ENCODE measurements at regions of chr3 and their contacts with region 1.

Region 1: DNA sequence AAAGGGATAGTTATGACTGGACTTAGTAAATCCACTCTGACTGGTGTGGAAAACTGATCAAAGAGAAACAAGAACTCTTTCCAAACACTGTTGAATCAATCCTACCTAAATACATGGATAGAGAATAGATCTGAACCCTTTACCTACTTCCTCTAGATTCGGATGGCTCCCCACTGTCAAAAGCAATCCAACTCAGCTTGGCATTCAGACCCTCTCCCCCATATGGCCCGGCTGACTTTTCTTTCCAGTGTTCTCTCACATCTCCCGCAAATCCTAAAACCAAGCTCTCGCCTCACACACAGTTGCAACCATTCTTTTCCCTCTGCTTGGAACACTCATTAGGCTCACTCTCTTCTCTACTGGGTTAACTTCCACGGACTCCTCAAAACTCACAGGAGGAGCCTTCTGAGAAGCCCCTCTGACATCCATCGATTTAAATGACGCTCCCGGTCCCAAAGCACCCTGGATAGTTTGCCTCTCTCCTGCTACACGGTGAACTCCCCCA is 639 bp downstream of the SPICE1 start:
- DNase-seq: no peak
- H3K4me3 ChIP-seq: peak overlapping the region; percentile 61 to 93
- H3K4me3 Mint-ChIP-seq: no peak overlapping the region
- H3K27ac ChIP-seq: peak overlapping the region; percentile 74
- H3K27ac Mint-ChIP-seq: no peak overlapping the region
- H3K4me1 ChIP-seq: peaks cover 19% of the 10 kb centered on the region
- H3K4me1 Mint-ChIP-seq: peaks cover 6 to 24% (median 9%) of the 10 kb centered on the region in 4 donors
- H3K27me3 ChIP-seq: peaks cover 4% of the 10 kb centered on the region
- H3K27me3 Mint-ChIP-seq: peaks cover 3 to 8% of the 10 kb centered on the region in 2 donors

Region 2: GRCh38 chr3:113264283-113265131 is 249.8 kb before region 1 on chr3:
- CTCF ChIA-PET with region 1: no interaction called
- POLR2A ChIA-PET with region 1: no interaction called
- intact Hi-C with region 1: no loop called
- DNase-seq: no peak
- H3K4me3 ChIP-seq: no peak overlapping the region
- H3K4me3 Mint-ChIP-seq: no peak overlapping the region
- H3K27ac ChIP-seq: no peak overlapping the region
- H3K27ac Mint-ChIP-seq: no peak overlapping the region
- H3K4me1 ChIP-seq: no peaks in the 10 kb centered on the region
- H3K4me1 Mint-ChIP-seq: no peaks in the 10 kb centered on the region
- H3K27me3 ChIP-seq: no peaks in the 10 kb centered on the region
- H3K27me3 Mint-ChIP-seq: peaks cover 1 to 10% of the 10 kb centered on the region in 2 donors

Region 3: DNA sequence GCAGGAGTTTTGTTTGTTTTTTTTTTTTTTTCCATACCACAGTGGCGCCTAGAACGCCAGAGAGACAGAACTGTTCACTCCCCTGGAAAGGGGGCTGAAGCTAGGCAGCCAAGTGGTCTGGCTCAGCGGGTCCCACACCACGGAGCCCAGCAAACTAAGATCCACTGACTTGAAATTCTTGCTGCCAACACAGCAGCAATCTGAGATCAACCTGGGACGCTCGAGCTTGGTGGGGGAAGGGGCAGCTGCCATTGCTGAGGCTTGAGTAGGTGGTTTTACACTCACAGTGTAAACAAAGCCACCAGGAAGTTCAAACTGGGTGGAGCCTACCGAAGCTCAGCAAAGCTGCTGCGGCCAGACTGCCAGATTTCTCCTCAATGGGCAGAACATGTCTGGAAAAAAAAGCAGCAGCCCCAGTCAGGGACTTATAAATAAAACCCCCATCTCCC is 29.1 kb before region 1 on chr3:
- CTCF ChIA-PET with region 1: interaction called, 3 read pairs
- POLR2A ChIA-PET with region 1: interaction called, 16 read pairs
- intact Hi-C with region 1: no loop called
- DNase-seq: peak; percentile 35 to 54 (median 46)
- H3K4me3 ChIP-seq: no peak overlapping the region
- H3K4me3 Mint-ChIP-seq: peak overlapping the region; percentile 40 to 70 (median 58)
- H3K27ac ChIP-seq: no peak overlapping the region
- H3K27ac Mint-ChIP-seq: peak overlapping the region in 6 of 7 donors; percentile 68 to 91 (median 76)
- H3K4me1 ChIP-seq: peaks cover 10% of the 10 kb centered on the region
- H3K4me1 Mint-ChIP-seq: peaks cover 6 to 20% (median 14%) of the 10 kb centered on the region in 4 donors
- H3K27me3 ChIP-seq: no peaks in the 10 kb centered on the region
- H3K27me3 Mint-ChIP-seq: no peaks in the 10 kb centered on the region

Region 4: GRCh38 chr3:113552851-113553250 is 38.5 kb after region 1 on chr3:
- CTCF ChIA-PET with region 1: interaction called, 13 read pairs
- POLR2A ChIA-PET with region 1: interaction called, 6 read pairs
- intact Hi-C with region 1: no loop called
- DNase-seq: peak; percentile 19 to 40 (median 27)
- H3K4me3 ChIP-seq: no peak overlapping the region
- H3K4me3 Mint-ChIP-seq: no peak overlapping the region
- H3K27ac ChIP-seq: no peak overlapping the region
- H3K27ac Mint-ChIP-seq: peak overlapping the region in 3 of 7 donors; percentile 2 to 77 (median 25)
- H3K4me1 ChIP-seq: peaks cover 15% of the 10 kb centered on the region
- H3K4me1 Mint-ChIP-seq: peaks cover 31 to 63% (median 38%) of the 10 kb centered on the region in 4 donors
- H3K27me3 ChIP-seq: no peaks in the 10 kb centered on the region
- H3K27me3 Mint-ChIP-seq: no peaks in the 10 kb centered on the region

Region 5: DNA sequence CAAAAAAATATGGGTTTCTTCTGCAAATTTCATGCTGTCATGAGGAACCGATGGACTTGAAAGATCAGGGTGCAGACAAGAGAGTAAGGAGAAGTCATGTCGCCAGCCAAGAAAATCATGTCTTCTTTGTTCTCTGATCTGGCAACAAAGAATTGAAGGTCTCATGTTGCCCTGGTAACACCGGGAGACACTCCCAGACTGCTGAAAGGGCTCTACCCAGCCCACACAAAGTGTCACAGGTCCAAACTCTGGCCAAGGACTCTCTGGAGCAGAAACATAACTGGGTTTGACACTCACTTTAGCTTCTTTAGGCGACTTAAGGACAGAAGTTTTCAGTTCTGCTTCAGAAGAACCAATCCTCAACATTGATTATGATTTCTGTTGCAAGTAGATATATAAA is 60.9 kb after region 1 on chr3:
- CTCF ChIA-PET with region 1: interaction called, 56 read pairs
- POLR2A ChIA-PET with region 1: interaction called, 7 read pairs
- intact Hi-C with region 1: no loop called
- DNase-seq: no peak
- H3K4me3 ChIP-seq: no peak overlapping the region
- H3K4me3 Mint-ChIP-seq: no peak overlapping the region
- H3K27ac ChIP-seq: no peak overlapping the region
- H3K27ac Mint-ChIP-seq: peak overlapping the region in 4 of 7 donors; percentile 49 to 86 (median 74)
- H3K4me1 ChIP-seq: no peaks in the 10 kb centered on the region
- H3K4me1 Mint-ChIP-seq: peaks cover 7 to 10% (median 8%) of the 10 kb centered on the region in 4 donors
- H3K27me3 ChIP-seq: no peaks in the 10 kb centered on the region
- H3K27me3 Mint-ChIP-seq: no peaks in the 10 kb centered on the region

Region 6: DNA sequence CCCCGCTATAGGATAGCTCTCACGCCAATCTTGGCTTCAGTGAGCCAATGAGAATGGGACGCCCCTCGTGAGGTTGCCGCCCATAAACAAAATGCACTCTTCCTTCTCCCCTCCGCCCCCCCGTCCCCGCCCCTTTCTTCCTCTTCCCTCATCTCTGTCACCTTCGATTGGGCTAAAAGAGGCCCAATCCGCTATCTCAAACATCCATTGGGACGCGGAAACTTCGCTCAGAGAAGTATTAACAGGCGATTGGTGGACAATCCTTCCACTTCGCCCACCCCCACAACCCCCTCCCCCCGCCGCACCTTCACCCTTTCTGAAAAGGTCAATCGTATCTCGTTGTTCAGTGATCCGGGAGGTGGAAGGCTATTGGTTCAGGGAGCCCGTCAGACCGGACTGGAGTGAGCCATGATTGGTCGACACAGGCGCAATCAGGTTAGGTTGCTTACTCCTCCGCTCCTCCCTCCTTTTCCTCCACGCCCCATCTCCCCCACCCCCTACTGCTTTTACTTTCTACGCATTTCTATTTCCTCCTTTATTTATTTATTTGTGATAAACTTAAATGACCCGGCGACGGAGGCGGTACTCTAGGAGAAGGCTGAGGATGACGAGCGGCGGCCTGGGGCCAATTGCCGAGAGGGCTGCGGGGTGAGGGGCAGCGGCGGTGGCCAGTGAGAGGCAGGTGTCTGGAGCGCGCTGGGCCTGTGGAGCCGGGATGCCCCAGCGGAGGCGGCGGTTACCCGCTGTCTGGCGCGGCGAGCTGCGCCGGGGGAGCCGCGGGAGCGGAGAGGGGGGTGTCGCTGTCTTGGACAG is 1633.2 kb after region 1 on chr3:
- CTCF ChIA-PET with region 1: no interaction called
- POLR2A ChIA-PET with region 1: no interaction called
- intact Hi-C with region 1: loop called (anchors 10 kb)
- DNase-seq: peak; percentile 97 to 100 (median 98)
- H3K4me3 ChIP-seq: peak overlapping the region; percentile 43 to 73
- H3K4me3 Mint-ChIP-seq: peak overlapping the region; percentile 93 to 100 (median 98)
- H3K27ac ChIP-seq: peak overlapping the region; percentile 97
- H3K27ac Mint-ChIP-seq: peak overlapping the region; percentile 90 to 100 (median 100)
- H3K4me1 ChIP-seq: peaks cover 25% of the 10 kb centered on the region
- H3K4me1 Mint-ChIP-seq: peaks cover 16 to 48% (median 28%) of the 10 kb centered on the region in 4 donors
- H3K27me3 ChIP-seq: no peaks in the 10 kb centered on the region
- H3K27me3 Mint-ChIP-seq: no peaks in the 10 kb centered on the region

Measured in CD4-positive, alpha-beta memory T cell (primary cell).